Right lobe of liver (tissue), 6 donors: ENCODE measurements at regions of chr16 and their contacts with region 1.

Region 1: DNA sequence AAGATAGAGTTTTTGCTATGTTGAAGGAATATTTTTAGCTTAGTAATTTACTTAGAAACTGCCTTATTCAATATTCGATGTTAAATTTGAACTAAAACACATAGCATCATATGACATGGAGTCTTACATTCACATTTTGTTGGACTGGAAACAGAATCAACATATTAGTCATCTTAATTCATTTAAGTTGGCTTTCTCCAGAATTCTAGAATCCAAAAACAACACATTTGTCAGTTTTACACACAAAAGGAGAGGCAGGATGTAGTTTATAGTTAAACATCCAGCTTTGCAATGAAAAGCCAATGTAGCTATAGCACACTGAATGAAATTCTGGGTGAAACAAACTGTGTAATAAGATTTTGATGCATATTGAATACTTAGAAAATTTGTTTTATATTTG is 43.3 kb downstream of the WWOX start:
- DNase-seq: no peak
- ATAC-seq: no peak
- H3K4me3 ChIP-seq: no peak overlapping the region
- H3K27ac ChIP-seq: no peak overlapping the region
- H3K4me1 ChIP-seq: peaks cover 0 to 7% (median 0%) of the 10 kb centered on the region in 4 donors
- H3K27me3 ChIP-seq: no peaks in the 10 kb centered on the region
- CTCF ChIP-seq: no peak
- POLR2A ChIP-seq: no peak

Region 2: GRCh38 chr16:78227855-78228254 is 85.1 kb after region 1 on chr16:
- intact Hi-C with region 1: loop called in 1 of 2 experiments (anchors 10 kb)
- DNase-seq: no peak
- ATAC-seq: peak; percentile 26 to 77 (median 50)
- H3K4me3 ChIP-seq: no peak overlapping the region
- H3K27ac ChIP-seq: no peak overlapping the region
- H3K4me1 ChIP-seq: no peaks in the 10 kb centered on the region
- H3K27me3 ChIP-seq: no peaks in the 10 kb centered on the region
- CTCF ChIP-seq: peak; percentile 6 to 29 (median 22)
- POLR2A ChIP-seq: no peak